ENCODE measurements at regions of chr7 and their contacts with region 1.

Region 1: GRCh38 chr7:54773472-54774399 is 14.7 kb upstream of the SEC61G start:
- DNase-seq: no peak
- H3K4me3 ChIP-seq: peak overlapping the region; percentile 35 to 54 (median 40)
- H3K27ac ChIP-seq: peak overlapping the region in 1 of 4 donors; percentile 16
- H3K4me1 ChIP-seq: peaks cover 0 to 8% (median 6%) of the 10 kb centered on the region in 4 donors
- H3K27me3 ChIP-seq: peaks cover 0 to 9% (median 0%) of the 10 kb centered on the region in 4 donors
- CTCF ChIP-seq: peak; percentile 71 to 88 (median 85)
- EP300 ChIP-seq: no peak
- POLR2A ChIP-seq: no peak

Region 2: GRCh38 chr7:53656881-53657280 is 1116.9 kb before region 1 on chr7:
- intact Hi-C with region 1: no loop called
- DNase-seq: no peak
- H3K4me3 ChIP-seq: no peak overlapping the region
- H3K27ac ChIP-seq: no peak overlapping the region
- H3K4me1 ChIP-seq: no peaks in the 10 kb centered on the region
- H3K27me3 ChIP-seq: no peaks in the 10 kb centered on the region
- CTCF ChIP-seq: no peak
- EP300 ChIP-seq: no peak
- POLR2A ChIP-seq: no peak

Region 3: DNA sequence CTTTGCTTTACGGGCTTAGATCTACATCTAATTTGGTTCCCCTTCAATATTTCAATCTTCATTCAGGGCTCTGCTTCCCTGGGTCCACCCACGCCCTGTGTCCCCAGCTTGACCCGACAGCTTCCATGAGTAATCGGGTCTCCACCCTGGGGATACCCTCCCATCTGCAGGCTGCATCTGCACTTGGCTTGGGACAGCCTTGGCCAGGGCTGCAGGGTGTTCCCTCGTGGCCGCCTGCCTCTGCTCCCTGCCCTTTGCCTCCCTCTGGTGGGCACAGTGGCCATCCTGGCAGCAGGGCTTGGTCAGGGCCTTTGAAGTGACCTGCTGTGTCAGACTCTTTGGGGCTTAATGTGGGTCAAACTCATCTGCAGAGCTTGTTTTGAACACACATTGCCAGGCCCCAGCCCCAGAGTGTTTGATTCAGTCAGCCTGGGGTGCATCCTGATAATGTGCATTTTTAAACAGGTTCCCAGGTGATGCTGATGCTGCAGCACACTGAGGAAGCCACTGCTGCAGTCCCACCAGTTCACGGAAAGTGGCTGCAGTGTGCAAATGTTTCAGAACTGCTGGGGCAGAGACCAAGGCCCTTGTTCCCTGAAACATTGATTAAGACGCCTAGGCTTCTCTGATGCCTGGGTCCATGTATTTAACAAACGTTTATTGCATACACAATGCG is 65.9 kb after region 1 on chr7:
- intact Hi-C with region 1: loop called (anchors 5 kb)
- DNase-seq: no peak
- H3K4me3 ChIP-seq: no peak overlapping the region
- H3K27ac ChIP-seq: no peak overlapping the region
- H3K4me1 ChIP-seq: peaks cover 10 to 31% (median 18%) of the 10 kb centered on the region in 4 donors
- H3K27me3 ChIP-seq: no peaks in the 10 kb centered on the region
- CTCF ChIP-seq: peak; percentile 65 to 75 (median 66)
- EP300 ChIP-seq: no peak
- POLR2A ChIP-seq: no peak

Region 4: DNA sequence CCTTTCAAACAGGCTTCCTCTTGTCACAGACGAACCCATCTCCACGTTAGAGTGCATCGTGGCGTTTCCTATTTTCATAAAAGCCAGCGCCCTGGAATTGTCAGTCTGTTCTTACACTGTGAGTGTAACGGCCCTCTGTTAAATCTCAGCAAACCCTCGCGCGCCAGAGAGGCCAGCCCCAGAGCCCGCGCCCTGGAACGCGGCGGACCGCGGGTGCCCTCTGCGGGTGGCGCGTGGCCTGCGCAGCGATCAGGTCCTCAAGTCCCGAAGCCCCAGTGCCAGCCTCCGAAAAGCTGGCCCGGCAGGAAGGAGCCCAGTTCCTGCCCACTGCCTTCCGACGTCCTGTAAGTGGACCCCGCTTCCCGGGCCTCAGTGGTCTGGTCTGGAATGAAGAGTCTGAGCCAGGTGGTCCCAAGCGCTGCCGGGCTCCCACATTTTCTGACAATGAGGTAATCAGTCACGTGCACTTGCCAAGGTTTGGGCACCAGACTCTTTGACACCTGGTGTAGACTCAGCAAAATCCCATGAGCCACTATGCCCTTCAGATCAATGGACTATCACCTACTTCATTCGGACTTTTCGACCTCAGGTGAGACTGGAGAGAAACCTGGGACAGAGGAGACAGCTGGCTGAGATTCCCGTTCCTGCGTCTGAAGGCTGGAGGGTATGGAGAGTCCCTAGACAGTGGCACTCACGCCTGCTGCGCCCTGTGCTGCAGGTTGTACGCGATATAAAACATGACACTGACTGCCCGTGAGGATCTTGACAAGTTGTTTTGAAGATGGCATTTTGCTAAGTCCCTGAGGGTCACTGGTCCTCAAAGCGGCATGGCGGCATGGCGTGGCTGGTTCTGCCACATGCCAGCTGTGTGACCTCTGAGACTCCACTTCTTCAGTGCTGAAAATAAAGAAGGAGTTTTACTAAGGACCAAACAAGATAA is 482.0 kb after region 1 on chr7:
- intact Hi-C with region 1: loop called (anchors 1 kb)
- DNase-seq: no peak
- H3K4me3 ChIP-seq: peak overlapping the region; percentile 65 to 78 (median 70)
- H3K27ac ChIP-seq: peak overlapping the region; percentile 55 to 77 (median 72)
- H3K4me1 ChIP-seq: peaks cover 17 to 21% (median 19%) of the 10 kb centered on the region in 4 donors
- H3K27me3 ChIP-seq: peaks cover 0 to 24% (median 0%) of the 10 kb centered on the region in 4 donors
- CTCF ChIP-seq: peak; percentile 87 to 93 (median 92)
- EP300 ChIP-seq: no peak
- POLR2A ChIP-seq: no peak

Region 5: GRCh38 chr7:55365675-55366460 is 592.1 kb after region 1 on chr7:
- intact Hi-C with region 1: loop called (anchors 10 kb)
- DNase-seq: peak; percentile 98
- H3K4me3 ChIP-seq: peak overlapping the region; percentile 76 to 95 (median 84)
- H3K27ac ChIP-seq: peak overlapping the region; percentile 94 to 97 (median 96)
- H3K4me1 ChIP-seq: peaks cover 19 to 25% (median 21%) of the 10 kb centered on the region in 4 donors
- H3K27me3 ChIP-seq: no peaks in the 10 kb centered on the region
- CTCF ChIP-seq: peak; percentile 16 to 35 (median 27)
- EP300 ChIP-seq: no peak
- POLR2A ChIP-seq: peak; percentile 34